GM12878 (cell line): ENCODE measurements at regions of chr20 and their contacts with region 1.

Region 1: GRCh38 chr20:48738399-48739304 is 89.1 kb downstream of the PREX1 start:
- DNase-seq: peak; percentile 92
- ATAC-seq: peak; percentile 83
- H3K4me3 ChIP-seq: peak overlapping the region; percentile 41; the same call in 1 of the 2 replicates
- H3K27ac ChIP-seq: peak overlapping the region; percentile 95
- H3K4me1 ChIP-seq: peaks cover 54% of the 10 kb centered on the region
- H3K27me3 ChIP-seq: no peaks in the 10 kb centered on the region
- CTCF ChIP-seq: no peak
- EP300 ChIP-seq: peak; percentile 99
- POLR2A ChIP-seq: no peak
- RAD21 ChIP-seq: peak; percentile 17; the same call in 1 of the 2 replicates

Region 2: GRCh38 chr20:48308882-48309281 is 429.8 kb before region 1 on chr20:
- CTCF ChIA-PET with region 1: no interaction called
- POLR2A ChIA-PET with region 1: no interaction called
- RAD21 ChIA-PET with region 1: no interaction called
- SMC1A ChIA-PET with region 1: no interaction called
- in situ Hi-C with region 1: no loop called
- intact Hi-C with region 1: no loop called
- DNase-seq: no peak
- ATAC-seq: no peak
- H3K4me3 ChIP-seq: no peak overlapping the region
- H3K27ac ChIP-seq: no peak overlapping the region
- H3K4me1 ChIP-seq: no peaks in the 10 kb centered on the region
- H3K27me3 ChIP-seq: no peaks in the 10 kb centered on the region; a peak in 2 of 4 replicates
- CTCF ChIP-seq: no peak
- EP300 ChIP-seq: no peak
- POLR2A ChIP-seq: no peak
- RAD21 ChIP-seq: no peak

Region 3: DNA sequence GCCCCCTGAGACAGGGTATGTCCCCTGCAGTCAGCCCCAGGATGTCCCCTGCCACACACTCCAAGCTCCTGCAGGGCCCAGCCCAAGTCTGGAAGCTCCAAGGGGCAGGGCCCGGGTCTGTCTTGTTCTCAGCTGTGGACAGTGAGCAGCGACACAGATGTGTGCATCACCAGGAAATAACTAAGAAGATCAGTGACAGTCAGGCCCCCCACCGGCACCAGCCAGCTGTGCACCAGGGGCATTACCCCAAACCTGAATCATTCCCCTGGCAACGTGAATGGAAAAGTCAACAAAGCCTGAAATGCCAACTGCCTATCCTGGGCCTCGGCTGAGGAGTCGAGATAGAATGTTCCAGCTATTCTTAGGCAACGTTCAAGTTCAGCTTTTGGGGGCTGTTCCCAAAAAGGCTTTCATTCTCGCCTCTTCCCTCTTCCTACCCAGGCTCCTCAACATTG is 15.9 kb before region 1 on chr20:
- CTCF ChIA-PET with region 1: interaction called, 13 read pairs
- POLR2A ChIA-PET with region 1: interaction called, 7 read pairs
- RAD21 ChIA-PET with region 1: interaction called, 14 read pairs
- SMC1A ChIA-PET with region 1: interaction called, 141 read pairs
- in situ Hi-C with region 1: no loop called
- intact Hi-C with region 1: loop called (anchors 2 kb)
- DNase-seq: no peak
- ATAC-seq: peak; percentile 14
- H3K4me3 ChIP-seq: no peak overlapping the region
- H3K27ac ChIP-seq: peak overlapping the region; percentile 89
- H3K4me1 ChIP-seq: peaks cover 63% of the 10 kb centered on the region
- H3K27me3 ChIP-seq: no peaks in the 10 kb centered on the region
- CTCF ChIP-seq: 0 out of 6 replicates have a peak, but pooled peaks of 1 of the 3 experiments have one; percentile 3
- EP300 ChIP-seq: no peak
- POLR2A ChIP-seq: no peak
- RAD21 ChIP-seq: no peak

Region 4: DNA sequence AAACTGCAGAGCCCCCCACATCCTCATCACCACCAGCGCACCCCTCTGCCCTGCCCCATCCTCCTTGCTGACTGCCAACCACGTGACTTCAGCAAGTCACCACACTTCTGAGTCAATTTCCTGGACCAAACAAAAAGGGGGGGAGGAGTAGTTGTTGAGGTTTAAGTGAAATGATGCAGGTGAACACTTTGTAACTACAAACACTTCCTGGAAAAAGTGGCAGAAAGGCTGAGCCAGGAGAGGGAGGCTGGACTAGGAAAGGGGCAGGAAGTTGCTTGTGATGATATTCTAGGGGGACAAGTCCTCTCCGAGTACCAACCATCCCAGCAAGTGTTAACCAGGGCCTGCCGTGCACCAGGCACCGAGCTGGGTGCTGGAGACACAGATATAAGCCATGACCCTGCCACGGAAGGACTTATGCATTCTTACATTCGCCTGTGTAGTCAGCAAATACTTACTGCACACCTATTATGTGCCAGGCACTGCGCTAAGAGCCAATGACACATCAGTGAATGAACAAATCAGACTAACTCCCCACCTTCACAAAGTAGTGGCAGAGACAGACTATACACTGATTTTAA is 21.8 kb after region 1 on chr20:
- CTCF ChIA-PET with region 1: no interaction called
- POLR2A ChIA-PET with region 1: interaction called, 3 read pairs
- RAD21 ChIA-PET with region 1: interaction called, 8 read pairs
- SMC1A ChIA-PET with region 1: interaction called, 16 read pairs
- in situ Hi-C with region 1: no loop called
- intact Hi-C with region 1: no loop called
- DNase-seq: no peak
- ATAC-seq: peak; percentile 83
- H3K4me3 ChIP-seq: peak overlapping the region; percentile 43; the same call in 1 of the 2 replicates
- H3K27ac ChIP-seq: peak overlapping the region; percentile 77
- H3K4me1 ChIP-seq: peaks cover 53% of the 10 kb centered on the region
- H3K27me3 ChIP-seq: no peaks in the 10 kb centered on the region
- CTCF ChIP-seq: no peak
- EP300 ChIP-seq: no peak; a peak in 1 of 4 replicates
- POLR2A ChIP-seq: peak; percentile 57; the same call in 1 of the 2 replicates
- RAD21 ChIP-seq: 0 out of 2 replicates have a peak, but pooled peaks have one; percentile 2

Region 5: GRCh38 chr20:48782053-48782452 is 43.4 kb after region 1 on chr20:
- CTCF ChIA-PET with region 1: no interaction called
- POLR2A ChIA-PET with region 1: interaction called, 28 read pairs
- RAD21 ChIA-PET with region 1: interaction called, 42 read pairs
- SMC1A ChIA-PET with region 1: interaction called, 9 read pairs
- in situ Hi-C with region 1: no loop called
- intact Hi-C with region 1: no loop called
- DNase-seq: no peak
- ATAC-seq: peak; percentile 9
- H3K4me3 ChIP-seq: peak overlapping the region; percentile 37; the same call in 1 of the 2 replicates
- H3K27ac ChIP-seq: peak overlapping the region; percentile 83
- H3K4me1 ChIP-seq: peaks cover 61% of the 10 kb centered on the region
- H3K27me3 ChIP-seq: no peaks in the 10 kb centered on the region
- CTCF ChIP-seq: no peak
- EP300 ChIP-seq: no peak
- POLR2A ChIP-seq: no peak
- RAD21 ChIP-seq: no peak

Region 6: GRCh38 chr20:49028684-49029083 is 290.0 kb after region 1 on chr20:
- CTCF ChIA-PET with region 1: no interaction called
- POLR2A ChIA-PET with region 1: no interaction called
- RAD21 ChIA-PET with region 1: no interaction called
- SMC1A ChIA-PET with region 1: no interaction called
- in situ Hi-C with region 1: no loop called
- intact Hi-C with region 1: no loop called
- DNase-seq: no peak
- ATAC-seq: peak; percentile 64
- H3K4me3 ChIP-seq: no peak overlapping the region
- H3K27ac ChIP-seq: no peak overlapping the region
- H3K4me1 ChIP-seq: no peaks in the 10 kb centered on the region
- H3K27me3 ChIP-seq: no peaks in the 10 kb centered on the region
- CTCF ChIP-seq: peak; percentile 34 to 37 (median 36); a peak in 4 of 6 replicates
- EP300 ChIP-seq: no peak
- POLR2A ChIP-seq: no peak
- RAD21 ChIP-seq: 0 out of 2 replicates have a peak, but pooled peaks have one; percentile 27